GM10248 (cell line): ENCODE measurements at regions of chr6 and their contacts with region 1.

Region 1: DNA sequence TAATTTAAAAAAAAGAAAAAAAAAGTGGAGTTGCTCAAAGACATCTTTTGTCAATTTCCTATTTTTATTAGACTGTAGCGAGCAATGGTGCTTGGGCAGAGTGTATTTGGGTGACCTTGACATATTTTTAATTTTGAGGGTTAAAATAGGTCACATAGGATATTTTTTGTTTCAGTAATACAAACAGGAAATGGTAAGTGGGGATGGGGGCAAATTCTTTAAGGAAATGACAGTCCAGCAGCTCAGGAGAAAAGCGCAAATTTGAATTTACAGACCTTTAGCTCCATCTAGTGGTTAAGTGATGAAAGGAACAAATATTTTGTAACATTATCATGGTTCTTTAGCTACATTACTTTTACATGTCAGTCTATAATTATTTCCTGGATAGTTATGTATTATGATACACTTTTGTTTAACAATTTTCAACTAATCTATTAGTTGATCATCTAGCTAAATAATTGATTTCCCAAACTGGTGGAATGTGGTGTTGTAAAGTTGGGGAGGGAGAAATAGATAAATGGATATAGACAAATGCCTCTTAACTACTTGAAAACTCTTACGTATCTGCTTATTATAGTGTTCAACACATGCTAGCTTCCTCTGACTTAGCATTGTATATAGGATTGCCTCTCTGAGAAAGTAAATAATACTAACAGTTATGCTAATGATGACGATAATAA is 10.0 kb downstream of the CITED2 start:
- DNase-seq: peak; percentile 53
- CTCF ChIP-seq: peak; percentile 44

Region 2: DNA sequence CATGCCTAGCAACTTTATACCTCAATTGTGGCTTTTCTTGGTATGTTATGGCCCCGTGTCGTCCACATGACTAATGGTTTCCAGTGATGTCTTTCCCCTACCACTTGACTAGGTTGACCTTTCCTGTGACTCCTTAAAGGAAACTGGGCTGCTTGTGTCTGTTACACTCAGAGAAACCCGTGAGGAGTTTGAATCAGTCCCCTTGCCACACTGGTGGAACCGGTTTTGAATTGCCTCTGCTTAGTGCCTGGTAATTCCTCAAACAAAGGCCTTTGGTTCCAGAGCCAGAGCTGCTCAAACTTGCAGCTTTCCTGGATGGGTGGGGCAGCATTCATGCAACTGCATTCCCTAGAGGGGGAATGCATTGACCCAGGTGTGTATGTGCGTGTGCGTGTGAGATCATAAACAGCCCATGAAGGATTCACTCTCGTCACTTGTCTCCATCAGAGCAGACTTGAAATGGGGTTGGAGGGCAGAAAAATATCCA is 546.6 kb before region 1 on chr6:
- CTCF ChIA-PET with region 1: interaction called, 13 read pairs
- POLR2A ChIA-PET with region 1: no interaction called
- DNase-seq: peak; percentile 34
- CTCF ChIP-seq: no peak

Region 3: DNA sequence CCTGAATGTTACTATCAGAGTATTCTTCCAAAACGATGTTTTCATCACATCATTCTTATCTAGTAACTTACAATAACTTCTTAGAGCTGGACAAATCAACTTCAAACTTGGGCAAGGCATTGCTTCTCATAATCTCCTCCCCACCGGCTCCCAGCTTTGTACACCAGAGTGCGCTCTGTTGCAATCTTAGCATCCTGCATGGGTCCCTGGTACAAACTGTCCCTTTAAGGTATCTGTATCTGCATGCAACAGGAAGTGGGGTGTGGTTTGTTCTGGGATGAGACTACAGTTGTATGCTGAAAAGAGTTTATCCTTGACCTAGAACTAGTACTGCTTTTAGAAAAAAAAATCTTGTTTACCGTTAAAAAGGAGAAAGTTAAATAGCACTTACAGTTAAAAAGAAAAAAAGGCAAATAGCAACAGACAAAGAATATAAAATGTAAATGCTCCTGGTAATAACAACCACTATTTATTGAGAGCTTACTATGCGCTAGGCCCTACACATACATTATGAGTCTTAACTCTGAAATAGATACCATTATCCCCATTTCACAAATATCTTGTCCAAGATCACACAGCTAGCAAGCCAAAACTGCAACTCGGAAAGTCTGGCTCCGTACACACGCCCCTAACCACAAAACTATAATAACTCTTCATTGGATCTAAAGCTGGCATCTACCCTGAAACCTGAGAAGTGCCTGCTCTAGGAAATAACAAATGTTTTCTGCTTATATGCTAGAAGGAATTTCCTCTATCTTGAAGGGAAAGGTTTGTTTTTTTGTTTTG is 239.4 kb before region 1 on chr6:
- CTCF ChIA-PET with region 1: interaction called, 23 read pairs
- POLR2A ChIA-PET with region 1: no interaction called
- DNase-seq: peak; percentile 56
- CTCF ChIP-seq: peak; percentile 51

Region 4: DNA sequence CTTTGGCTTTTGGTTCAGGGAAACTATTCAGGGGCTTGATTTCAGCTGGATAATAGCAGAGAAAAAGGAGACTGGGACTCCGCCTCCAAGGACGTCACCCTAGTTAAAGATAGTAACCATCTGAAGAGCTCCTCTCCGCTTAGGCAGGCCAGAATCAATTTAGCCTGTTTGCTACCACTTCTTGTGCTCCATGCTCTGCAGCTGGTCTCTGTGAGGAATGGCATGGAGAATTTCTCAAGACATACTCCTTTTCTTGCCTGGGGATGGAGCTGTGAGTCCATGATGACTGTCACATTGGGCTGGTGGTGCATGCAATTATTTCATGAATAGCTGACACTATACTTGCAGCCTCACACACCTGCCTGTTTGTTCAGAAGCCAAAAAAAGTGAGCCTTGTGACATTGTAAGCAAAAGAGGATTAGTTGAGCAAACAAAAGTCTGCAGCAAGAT is 134.0 kb before region 1 on chr6:
- CTCF ChIA-PET with region 1: interaction called, 15 read pairs
- POLR2A ChIA-PET with region 1: no interaction called
- DNase-seq: no peak
- CTCF ChIP-seq: peak; percentile 41

Region 5: GRCh38 chr6:139334806-139335446 is 29.5 kb before region 1 on chr6:
- CTCF ChIA-PET with region 1: interaction called, 15 read pairs
- POLR2A ChIA-PET with region 1: no interaction called
- DNase-seq: no peak
- CTCF ChIP-seq: no peak

Region 6: GRCh38 chr6:139375232-139376016 is 11.0 kb after region 1 on chr6:
- CTCF ChIA-PET with region 1: interaction called, 33 read pairs
- POLR2A ChIA-PET with region 1: interaction called, 7 read pairs
- DNase-seq: peak; percentile 80
- CTCF ChIP-seq: no peak